ENCODE measurements at regions of chr7 and their contacts with region 1.

Region 1: GRCh38 chr7:1193593-1194424 is 33.8 kb upstream of the ZFAND2A start:
- DNase-seq: peak; percentile 54 to 80
- H3K4me3 ChIP-seq: no peak overlapping the region
- H3K27ac ChIP-seq: no peak overlapping the region
- H3K4me1 ChIP-seq: no peaks in the 10 kb centered on the region
- H3K27me3 ChIP-seq: peaks cover 57% of the 10 kb centered on the region
- CTCF ChIP-seq: peak; percentile 76

Region 2: DNA sequence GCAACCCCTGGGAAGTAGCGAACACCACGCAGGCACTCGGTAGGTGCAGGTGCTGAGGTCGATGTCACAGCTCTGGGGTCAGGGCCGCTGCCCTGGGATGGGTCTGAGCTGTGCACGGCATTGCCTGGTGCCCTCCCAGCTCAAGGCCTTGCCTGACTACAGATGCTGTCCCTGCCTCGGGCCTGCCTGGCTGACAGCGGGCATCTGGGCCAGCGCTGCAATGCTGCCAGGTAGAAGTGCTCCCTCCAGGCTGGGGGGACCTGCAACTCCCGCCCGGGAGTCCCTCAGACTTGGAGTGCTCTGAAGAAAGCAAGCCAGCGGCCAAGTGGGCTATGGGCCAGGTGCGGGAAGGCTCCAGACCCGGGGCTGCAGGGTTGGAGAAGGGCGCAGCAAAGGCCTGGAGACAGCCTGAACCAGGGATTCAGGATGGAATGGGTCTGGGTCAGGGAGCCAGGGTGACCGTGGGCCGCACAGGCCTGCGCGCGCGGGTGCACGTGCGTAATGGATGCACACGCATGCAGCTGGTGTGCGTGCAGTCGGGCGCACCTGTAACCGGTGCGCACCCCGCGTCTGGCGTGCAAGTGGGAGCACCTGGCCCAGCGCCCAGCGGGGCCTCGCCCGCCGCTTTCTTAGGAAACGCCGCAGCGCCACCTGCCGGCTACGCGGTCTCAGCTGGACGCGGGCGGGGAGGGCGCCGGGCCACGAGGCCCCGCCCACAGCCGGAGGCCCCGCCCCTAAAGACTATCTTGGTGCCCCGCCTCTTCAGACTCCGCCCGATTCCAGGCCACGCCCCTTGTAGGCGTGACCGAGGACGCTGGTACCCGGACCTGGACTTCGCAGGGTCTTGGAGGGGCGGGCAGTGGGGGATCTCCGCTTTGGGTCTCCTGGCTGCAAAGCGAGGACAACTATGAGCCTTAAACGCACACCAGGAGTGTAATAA is 218.8 kb after region 1 on chr7:
- CTCF ChIA-PET with region 1: no interaction called
- POLR2A ChIA-PET with region 1: no interaction called
- intact Hi-C with region 1: loop called (anchors 2 kb)
- DNase-seq: peak; percentile 65 to 91
- H3K4me3 ChIP-seq: no peak overlapping the region; the same call in 1 of the 2 replicates
- H3K27ac ChIP-seq: no peak overlapping the region
- H3K4me1 ChIP-seq: no peaks in the 10 kb centered on the region
- H3K27me3 ChIP-seq: peaks cover 65% of the 10 kb centered on the region
- CTCF ChIP-seq: peak; percentile 90

Region 3: GRCh38 chr7:1432411-1433082 is 238.7 kb after region 1 on chr7:
- CTCF ChIA-PET with region 1: no interaction called
- POLR2A ChIA-PET with region 1: no interaction called
- intact Hi-C with region 1: loop called (anchors 1 kb)
- DNase-seq: peak in 1 of 2 experiments; percentile 77
- H3K4me3 ChIP-seq: no peak overlapping the region
- H3K27ac ChIP-seq: no peak overlapping the region
- H3K4me1 ChIP-seq: no peaks in the 10 kb centered on the region
- H3K27me3 ChIP-seq: no peaks in the 10 kb centered on the region
- CTCF ChIP-seq: peak; percentile 98

Region 4: DNA sequence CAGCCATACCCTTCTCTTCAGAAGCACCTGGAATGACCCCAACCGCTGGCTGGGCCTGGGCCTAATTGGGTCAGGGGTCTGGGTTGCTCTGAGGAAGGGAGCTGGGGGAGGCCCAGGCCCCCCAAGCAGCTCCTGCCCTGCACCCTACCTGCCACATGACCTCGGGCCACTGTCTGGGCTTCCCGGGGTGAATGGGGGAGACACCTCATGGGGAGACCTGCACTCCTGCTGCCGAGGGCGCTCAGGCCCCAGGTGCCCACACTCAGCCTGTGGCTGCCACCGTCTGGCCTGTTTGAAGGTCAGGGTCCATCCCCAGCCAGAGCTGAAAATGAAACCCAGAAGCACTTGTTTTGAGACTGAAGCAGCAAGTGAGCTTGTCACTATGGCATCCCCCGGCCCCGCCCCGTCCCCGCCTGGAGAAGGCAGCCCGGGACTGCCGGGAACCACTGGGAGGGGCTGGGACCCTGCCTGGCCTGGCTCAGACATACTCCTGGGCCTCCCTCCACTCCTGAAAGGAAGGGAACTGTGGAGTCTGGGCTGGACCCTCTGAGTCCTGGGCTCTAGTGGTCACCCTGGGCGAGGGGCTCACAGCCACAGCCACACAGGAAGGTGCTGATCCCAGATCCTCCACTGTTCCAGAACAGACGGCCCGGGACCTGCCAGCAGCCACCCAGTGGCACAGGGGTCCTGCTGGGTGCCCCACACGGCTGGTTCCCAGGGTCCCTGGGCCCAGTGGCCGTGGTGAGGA is 272.9 kb after region 1 on chr7:
- CTCF ChIA-PET with region 1: no interaction called
- POLR2A ChIA-PET with region 1: no interaction called
- intact Hi-C with region 1: loop called (anchors 2 kb)
- DNase-seq: peak in 1 of 2 experiments; percentile 87
- H3K4me3 ChIP-seq: no peak overlapping the region
- H3K27ac ChIP-seq: no peak overlapping the region
- H3K4me1 ChIP-seq: peaks cover 14% of the 10 kb centered on the region
- H3K27me3 ChIP-seq: no peaks in the 10 kb centered on the region
- CTCF ChIP-seq: no peak

Region 5: DNA sequence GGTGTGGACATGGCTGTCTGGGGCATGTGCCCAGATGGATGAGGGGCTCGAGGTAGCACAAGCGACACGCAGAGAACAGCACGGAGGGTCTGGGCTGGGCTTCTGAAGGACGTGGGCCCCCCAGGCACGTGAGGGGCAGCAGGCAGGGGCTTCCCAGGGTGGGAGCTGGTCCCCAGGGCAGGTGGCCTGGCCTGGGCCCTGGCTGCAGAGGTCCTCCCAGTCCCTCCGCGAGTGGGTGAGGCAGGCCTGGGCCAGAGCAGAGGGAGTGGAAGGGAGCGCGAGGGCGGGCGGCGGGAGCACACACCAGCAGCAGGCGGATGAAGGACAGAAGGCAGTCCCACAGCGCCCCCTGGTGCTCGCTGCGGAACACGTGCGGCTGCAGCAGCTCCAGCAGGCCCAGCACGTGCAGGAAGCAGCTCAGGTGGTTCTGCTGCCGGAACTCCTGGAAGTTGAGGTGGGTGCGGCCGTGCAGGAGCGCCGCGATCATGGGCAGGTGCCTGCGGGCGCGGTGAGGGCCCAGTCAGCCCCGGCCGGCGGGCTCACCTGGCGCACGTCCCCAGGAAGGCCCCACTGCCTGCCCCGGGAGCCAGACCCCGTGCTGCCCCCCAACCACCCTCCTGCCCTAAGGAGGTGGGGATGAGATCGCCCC is 280.2 kb after region 1 on chr7:
- CTCF ChIA-PET with region 1: no interaction called
- POLR2A ChIA-PET with region 1: no interaction called
- intact Hi-C with region 1: loop called (anchors 1 kb)
- DNase-seq: peak; percentile 73 to 95
- H3K4me3 ChIP-seq: no peak overlapping the region
- H3K27ac ChIP-seq: no peak overlapping the region
- H3K4me1 ChIP-seq: no peaks in the 10 kb centered on the region
- H3K27me3 ChIP-seq: no peaks in the 10 kb centered on the region
- CTCF ChIP-seq: peak; percentile 95

Measured in PC-9 (cell line).